CD4-positive, alpha-beta memory T cell (primary cell): ENCODE measurements at regions of chr11 and their contacts with region 1.

Region 1: GRCh38 chr11:107565219-107565937 is at the start of gene ALKBH8:
- DNase-seq: peak; percentile 74 to 86 (median 77)
- H3K4me3 ChIP-seq: peak within 1 kb of the TSS; percentile 68 to 73
- H3K4me3 Mint-ChIP-seq: peak within 1 kb of the TSS; percentile 94 to 98 (median 96)
- H3K27ac ChIP-seq: peak within 1 kb of the TSS; percentile 58
- H3K27ac Mint-ChIP-seq: peak within 1 kb of the TSS; percentile 89 to 97 (median 95)
- H3K4me1 ChIP-seq: peaks cover 28% of the 10 kb centered on the region
- H3K4me1 Mint-ChIP-seq: peaks cover 23 to 43% (median 40%) of the 10 kb centered on the region in 4 donors
- H3K27me3 ChIP-seq: no peaks in the 10 kb centered on the region
- H3K27me3 Mint-ChIP-seq: no peaks in the 10 kb centered on the region
- total RNA-seq, gene ALKBH8: 14.6 to 15.2 TPM

Region 2: GRCh38 chr11:107457558-107458271 is 107.7 kb before region 1 on chr11 and contains the start of gene CWF19L2:
- CTCF ChIA-PET with region 1: interaction called, 5 read pairs
- POLR2A ChIA-PET with region 1: interaction called, 23 read pairs
- intact Hi-C with region 1: loop called (anchors 1 kb)
- DNase-seq: peak; percentile 90 to 94 (median 93)
- H3K4me3 ChIP-seq: peak within 1 kb of the TSS; percentile 78 to 90
- H3K4me3 Mint-ChIP-seq: peak within 1 kb of the TSS; percentile 91 to 97 (median 94)
- H3K27ac ChIP-seq: peak within 1 kb of the TSS; percentile 81
- H3K27ac Mint-ChIP-seq: peak within 1 kb of the TSS; percentile 80 to 97 (median 95)
- H3K4me1 ChIP-seq: peaks cover 16% of the 10 kb centered on the region
- H3K4me1 Mint-ChIP-seq: peaks cover 22 to 31% (median 25%) of the 10 kb centered on the region in 4 donors
- H3K27me3 ChIP-seq: no peaks in the 10 kb centered on the region
- H3K27me3 Mint-ChIP-seq: no peaks in the 10 kb centered on the region
- total RNA-seq, gene CWF19L2: 34.8 to 38.8 TPM

Region 3: DNA sequence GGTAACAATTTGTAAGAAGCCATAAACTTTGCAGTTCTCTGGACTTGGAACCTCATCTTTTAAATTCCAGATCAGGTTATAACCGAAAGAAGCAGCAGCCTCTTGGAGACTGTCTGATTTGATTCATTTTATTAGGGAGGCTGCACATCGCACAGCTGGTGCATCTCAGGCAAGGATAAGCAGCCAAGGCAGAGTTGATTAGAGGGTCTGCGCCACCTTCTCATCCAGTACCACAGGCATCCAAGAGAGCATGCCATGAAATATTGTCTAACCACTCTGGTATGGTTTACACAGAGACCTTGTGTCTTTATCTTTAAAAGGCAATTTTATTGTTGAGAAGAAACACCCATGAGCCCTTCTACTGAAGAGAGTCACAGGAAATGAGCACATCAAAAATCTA is 91.6 kb before region 1 on chr11:
- CTCF ChIA-PET with region 1: no interaction called
- POLR2A ChIA-PET with region 1: no interaction called
- intact Hi-C with region 1: no loop called
- DNase-seq: no peak
- H3K4me3 ChIP-seq: no peak overlapping the region
- H3K4me3 Mint-ChIP-seq: no peak overlapping the region
- H3K27ac ChIP-seq: no peak overlapping the region
- H3K27ac Mint-ChIP-seq: no peak overlapping the region
- H3K4me1 ChIP-seq: no peaks in the 10 kb centered on the region
- H3K4me1 Mint-ChIP-seq: no peaks in the 10 kb centered on the region
- H3K27me3 ChIP-seq: no peaks in the 10 kb centered on the region
- H3K27me3 Mint-ChIP-seq: peaks cover 26 to 44% of the 10 kb centered on the region in 2 donors

Region 4: GRCh38 chr11:107689317-107690202 is 124.2 kb after region 1 on chr11:
- CTCF ChIA-PET with region 1: interaction called, 32 read pairs
- POLR2A ChIA-PET with region 1: interaction called, 3 read pairs
- intact Hi-C with region 1: loop called (anchors 1 kb)
- DNase-seq: peak; percentile 33 to 59 (median 40)
- H3K4me3 ChIP-seq: no peak overlapping the region
- H3K4me3 Mint-ChIP-seq: no peak overlapping the region
- H3K27ac ChIP-seq: no peak overlapping the region
- H3K27ac Mint-ChIP-seq: no peak overlapping the region
- H3K4me1 ChIP-seq: no peaks in the 10 kb centered on the region
- H3K4me1 Mint-ChIP-seq: peaks cover 0 to 5% (median 1%) of the 10 kb centered on the region in 4 donors
- H3K27me3 ChIP-seq: no peaks in the 10 kb centered on the region
- H3K27me3 Mint-ChIP-seq: peaks cover 11% of the 10 kb centered on the region in 2 donors

Region 5: GRCh38 chr11:107799218-107799859 is 234.0 kb after region 1 on chr11:
- CTCF ChIA-PET with region 1: interaction called, 3 read pairs
- POLR2A ChIA-PET with region 1: no interaction called
- intact Hi-C with region 1: loop called (anchors 1 kb)
- DNase-seq: peak; percentile 31 to 52 (median 43)
- H3K4me3 ChIP-seq: no peak overlapping the region
- H3K4me3 Mint-ChIP-seq: no peak overlapping the region
- H3K27ac ChIP-seq: no peak overlapping the region
- H3K27ac Mint-ChIP-seq: no peak overlapping the region
- H3K4me1 ChIP-seq: no peaks in the 10 kb centered on the region
- H3K4me1 Mint-ChIP-seq: peaks cover 0 to 2% (median 0%) of the 10 kb centered on the region in 4 donors
- H3K27me3 ChIP-seq: no peaks in the 10 kb centered on the region
- H3K27me3 Mint-ChIP-seq: no peaks in the 10 kb centered on the region

Region 6: GRCh38 chr11:108008656-108009496 is 443.5 kb after region 1 on chr11 and contains the start of gene CUL5:
- CTCF ChIA-PET with region 1: no interaction called
- POLR2A ChIA-PET with region 1: interaction called, 3 read pairs
- intact Hi-C with region 1: loop called (anchors 1 kb)
- DNase-seq: peak; percentile 87 to 91 (median 89)
- H3K4me3 ChIP-seq: peak within 1 kb of the TSS; percentile 98 to 100
- H3K4me3 Mint-ChIP-seq: peak within 1 kb of the TSS; percentile 94 to 100 (median 99)
- H3K27ac ChIP-seq: peak within 1 kb of the TSS; percentile 96
- H3K27ac Mint-ChIP-seq: peak within 1 kb of the TSS; percentile 92 to 98 (median 97)
- H3K4me1 ChIP-seq: peaks cover 48% of the 10 kb centered on the region
- H3K4me1 Mint-ChIP-seq: peaks cover 0 to 18% (median 14%) of the 10 kb centered on the region in 4 donors
- H3K27me3 ChIP-seq: no peaks in the 10 kb centered on the region
- H3K27me3 Mint-ChIP-seq: no peaks in the 10 kb centered on the region
- total RNA-seq, gene CUL5: 37.3 to 38.9 TPM

Region 7: GRCh38 chr11:108647701-108648527 is 1082.5 kb after region 1 on chr11:
- CTCF ChIA-PET with region 1: no interaction called
- POLR2A ChIA-PET with region 1: no interaction called
- intact Hi-C with region 1: loop called (anchors 5 kb)
- DNase-seq: peak; percentile 58 to 65 (median 63)
- H3K4me3 ChIP-seq: no peak overlapping the region
- H3K4me3 Mint-ChIP-seq: no peak overlapping the region
- H3K27ac ChIP-seq: no peak overlapping the region
- H3K27ac Mint-ChIP-seq: no peak overlapping the region
- H3K4me1 ChIP-seq: no peaks in the 10 kb centered on the region
- H3K4me1 Mint-ChIP-seq: no peaks in the 10 kb centered on the region
- H3K27me3 ChIP-seq: no peaks in the 10 kb centered on the region
- H3K27me3 Mint-ChIP-seq: peaks cover 1 to 2% of the 10 kb centered on the region in 2 donors